ENCODE measurements at regions of chr1 and their contacts with region 1.

Region 1: DNA sequence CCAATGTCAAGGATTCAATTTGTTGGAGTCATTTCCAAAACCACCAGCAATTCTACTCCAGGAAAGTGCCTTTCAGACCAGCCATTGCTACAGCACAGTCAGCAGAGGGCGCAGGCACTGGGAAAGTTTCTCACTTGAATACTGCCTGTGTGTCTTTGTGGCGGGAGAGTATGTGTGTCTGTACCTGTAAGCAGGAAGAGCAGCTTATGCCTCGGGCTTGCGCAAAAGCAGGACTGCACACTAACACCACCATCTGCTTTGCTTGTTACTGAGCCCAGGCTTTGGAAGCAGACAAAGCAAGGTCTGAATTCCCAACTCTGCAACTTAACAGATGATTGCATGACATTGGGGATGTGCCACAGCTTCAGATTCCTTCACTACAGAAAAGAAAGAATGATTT is 7.0 kb upstream of the CTSE start:
- DNase-seq: peak; percentile 72 to 79
- H3K4me3 ChIP-seq: no peak overlapping the region
- H3K27ac ChIP-seq: no peak overlapping the region
- H3K4me1 ChIP-seq: peaks cover 5% of the 10 kb centered on the region; the same call in 1 of the 2 replicates
- H3K27me3 ChIP-seq: no peaks in the 10 kb centered on the region
- CTCF ChIP-seq: peak; percentile 84

Region 2: GRCh38 chr1:205983925-205984725 is 46.6 kb before region 1 on chr1:
- CTCF ChIA-PET with region 1: interaction called, 6 read pairs
- POLR2A ChIA-PET with region 1: no interaction called
- intact Hi-C with region 1: loop called (anchors 2 kb)
- DNase-seq: peak; percentile 59 to 91
- H3K4me3 ChIP-seq: no peak overlapping the region
- H3K27ac ChIP-seq: no peak overlapping the region
- H3K4me1 ChIP-seq: peaks cover 18% of the 10 kb centered on the region
- H3K27me3 ChIP-seq: no peaks in the 10 kb centered on the region
- CTCF ChIP-seq: peak; percentile 79

Region 3: DNA sequence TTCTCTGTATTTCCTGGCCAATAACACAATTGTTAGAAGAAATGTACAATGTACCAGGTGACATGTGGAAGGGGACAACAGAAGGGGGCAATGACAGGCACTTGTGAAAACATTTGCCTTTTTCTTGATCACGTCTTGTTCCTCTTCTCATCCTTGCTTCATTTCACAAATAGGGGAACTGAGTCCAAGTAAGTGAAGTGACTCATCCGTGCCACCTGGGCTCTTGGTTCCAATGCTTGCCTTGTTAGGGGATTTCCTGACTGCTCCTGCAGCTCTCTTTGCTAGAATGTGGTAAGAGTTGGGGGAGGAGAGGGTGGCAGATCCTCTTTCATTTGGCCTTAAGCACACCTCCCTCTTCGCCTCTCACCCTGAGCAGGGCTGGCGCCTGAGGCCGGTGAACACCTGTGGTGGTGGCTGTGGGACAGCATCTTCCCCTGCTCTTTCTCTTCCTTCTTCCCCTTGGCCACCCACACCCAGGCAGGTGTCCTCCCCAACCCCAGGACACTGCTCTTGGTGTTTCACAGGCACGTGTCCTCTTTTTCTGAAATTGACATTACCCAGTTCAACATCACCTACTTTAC is 20.0 kb after region 1 on chr1:
- CTCF ChIA-PET with region 1: no interaction called
- POLR2A ChIA-PET with region 1: no interaction called
- intact Hi-C with region 1: no loop called
- DNase-seq: peak in 1 of 2 experiments; percentile 58
- H3K4me3 ChIP-seq: no peak overlapping the region
- H3K27ac ChIP-seq: no peak overlapping the region
- H3K4me1 ChIP-seq: peaks cover 11% of the 10 kb centered on the region
- H3K27me3 ChIP-seq: no peaks in the 10 kb centered on the region
- CTCF ChIP-seq: no peak

Region 4: DNA sequence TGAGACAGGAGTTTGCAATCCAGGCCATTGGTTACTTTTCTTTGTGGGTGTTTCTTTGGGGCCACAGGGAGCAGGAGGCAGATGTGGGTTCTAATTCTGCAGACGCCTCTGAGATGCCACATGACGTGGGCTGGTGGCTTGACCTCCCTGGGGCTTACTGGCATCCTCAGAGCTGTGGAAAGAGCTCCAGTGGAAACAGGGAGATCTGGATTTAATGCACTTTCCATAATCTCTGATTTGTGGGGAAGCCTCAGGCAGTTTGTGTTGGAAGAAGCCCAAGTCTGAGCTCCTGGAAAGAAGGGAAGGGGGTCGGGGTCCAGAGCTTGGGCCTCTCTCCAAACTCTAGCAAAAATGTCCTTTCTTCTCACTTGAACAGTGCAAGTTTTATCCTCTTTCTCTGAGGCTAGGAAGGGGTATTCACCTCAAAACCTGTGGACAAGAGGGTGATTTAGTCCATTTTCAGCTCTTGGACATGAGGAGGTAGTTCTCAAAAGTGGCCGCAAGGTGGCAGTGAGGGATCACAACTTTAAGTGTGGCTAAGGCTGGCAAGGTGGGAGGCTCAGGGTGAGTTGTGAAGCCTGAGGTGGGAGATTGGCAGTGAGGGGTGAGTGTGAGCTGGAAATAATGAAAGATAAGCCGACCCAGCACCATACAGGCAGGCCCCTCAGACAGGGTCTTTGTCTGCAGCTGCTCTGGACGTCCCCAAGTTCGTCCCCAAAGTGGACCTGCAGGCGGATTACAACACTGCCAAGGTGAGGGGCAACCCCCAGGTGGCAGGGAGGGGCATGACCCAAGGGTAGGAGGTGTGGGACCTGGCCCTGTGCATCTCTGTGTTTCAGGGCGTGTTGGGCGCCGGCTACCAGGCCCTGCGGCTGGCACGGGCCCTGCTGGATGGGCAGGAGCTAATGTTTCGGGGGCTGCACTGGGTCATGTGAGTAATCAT is 448.7 kb after region 1 on chr1:
- CTCF ChIA-PET with region 1: no interaction called
- POLR2A ChIA-PET with region 1: no interaction called
- intact Hi-C with region 1: no loop called
- DNase-seq: peak; percentile 51 to 63
- H3K4me3 ChIP-seq: no peak overlapping the region
- H3K27ac ChIP-seq: no peak overlapping the region
- H3K4me1 ChIP-seq: no peaks in the 10 kb centered on the region
- H3K27me3 ChIP-seq: no peaks in the 10 kb centered on the region
- CTCF ChIP-seq: peak; percentile 93